Naive thymus-derived CD4-positive, alpha-beta T cell (primary cell): ENCODE measurements at regions of chr14 and their contacts with region 1.

Region 1: DNA sequence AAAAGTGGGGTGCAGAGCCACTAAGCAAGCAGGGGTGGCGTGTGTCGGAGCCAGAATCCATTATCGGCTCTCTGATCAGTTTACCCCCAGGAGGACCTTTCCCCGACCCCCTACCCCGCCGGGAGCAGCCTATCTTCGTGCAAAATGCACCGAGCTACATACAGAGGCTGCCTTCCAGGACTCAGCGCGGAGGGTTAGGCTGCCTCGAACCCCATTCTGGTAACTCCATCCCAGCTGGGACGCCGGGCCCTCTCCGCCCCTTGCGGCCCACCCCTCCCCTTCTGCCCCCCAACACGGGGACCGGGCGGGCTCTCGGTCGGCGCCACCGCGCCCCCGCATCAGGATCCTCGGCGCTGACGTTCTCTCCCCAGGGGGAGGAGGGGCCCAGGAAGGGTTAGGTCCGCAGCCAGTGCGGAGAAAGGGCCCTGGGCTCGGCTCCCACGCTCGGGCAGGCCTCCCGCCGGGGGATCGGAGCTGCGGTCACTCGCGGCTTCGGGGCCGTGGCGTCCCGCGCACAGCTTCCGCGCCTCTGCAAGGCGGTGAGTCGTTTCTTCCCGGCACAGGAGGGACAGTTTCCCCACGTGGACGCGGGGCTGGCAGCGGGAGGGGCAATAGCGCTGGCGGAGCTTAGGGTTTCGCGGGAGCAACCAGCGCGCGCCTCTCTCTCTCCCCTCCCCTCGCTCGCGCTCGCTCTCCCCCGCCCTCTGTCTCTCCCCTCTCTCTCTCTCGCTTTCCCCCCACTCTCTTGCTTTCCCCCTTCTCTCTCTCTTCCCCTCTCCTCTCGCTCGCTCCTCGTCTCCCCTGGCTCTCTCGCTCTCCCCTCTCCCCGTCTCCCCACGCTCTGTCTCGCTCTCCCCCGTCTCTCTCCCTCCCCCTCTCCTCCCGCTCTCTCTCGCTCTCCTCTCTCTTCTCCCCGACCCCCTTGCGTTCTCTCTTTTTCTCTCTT is 12.5 kb upstream of the MAP3K9 start:
- DNase-seq: peak in 7 of 9 donors; percentile 27 to 77 (median 38)
- ATAC-seq: peak; percentile 47
- H3K4me3 ChIP-seq: peak overlapping the region; percentile 64
- H3K4me3 Mint-ChIP-seq: peak overlapping the region; percentile 63 to 88 (median 86)
- H3K27ac ChIP-seq: peak overlapping the region; percentile 33
- H3K27ac Mint-ChIP-seq: peak overlapping the region in 3 of 9 donors; percentile 21 to 76 (median 46)
- H3K4me1 ChIP-seq: peaks cover 0 to 15% of the 10 kb centered on the region in 2 donors
- H3K4me1 Mint-ChIP-seq: peaks cover 6 to 36% (median 16%) of the 10 kb centered on the region in 7 donors
- H3K27me3 ChIP-seq: no peaks in the 10 kb centered on the region
- H3K27me3 Mint-ChIP-seq: peaks cover 6 to 34% (median 11%) of the 10 kb centered on the region in 5 donors

Region 2: GRCh38 chr14:70622111-70622712 is 199.6 kb before region 1 on chr14:
- CTCF ChIA-PET with region 1: interaction called, 8 read pairs
- POLR2A ChIA-PET with region 1: interaction called, 3 read pairs
- intact Hi-C with region 1: loop called (anchors 1 kb)
- DNase-seq: peak in 8 of 9 donors; percentile 42 to 66 (median 56)
- ATAC-seq: peak; percentile 85
- H3K4me3 ChIP-seq: no peak overlapping the region
- H3K4me3 Mint-ChIP-seq: peak overlapping the region in 1 of 10 donors; percentile 11
- H3K27ac ChIP-seq: no peak overlapping the region
- H3K27ac Mint-ChIP-seq: peak overlapping the region in 3 of 9 donors; percentile 2 to 29 (median 17)
- H3K4me1 ChIP-seq: no peaks in the 10 kb centered on the region
- H3K4me1 Mint-ChIP-seq: peaks cover 0 to 10% (median 6%) of the 10 kb centered on the region in 7 donors
- H3K27me3 ChIP-seq: no peaks in the 10 kb centered on the region
- H3K27me3 Mint-ChIP-seq: peaks cover 0 to 20% (median 0%) of the 10 kb centered on the region in 5 donors

Region 3: GRCh38 chr14:70770490-70770889 is 51.4 kb before region 1 on chr14:
- CTCF ChIA-PET with region 1: no interaction called
- POLR2A ChIA-PET with region 1: no interaction called
- intact Hi-C with region 1: no loop called
- DNase-seq: no peak
- ATAC-seq: no peak
- H3K4me3 ChIP-seq: no peak overlapping the region
- H3K4me3 Mint-ChIP-seq: no peak overlapping the region
- H3K27ac ChIP-seq: no peak overlapping the region
- H3K27ac Mint-ChIP-seq: no peak overlapping the region
- H3K4me1 ChIP-seq: no peaks in the 10 kb centered on the region
- H3K4me1 Mint-ChIP-seq: peaks cover 0 to 5% (median 0%) of the 10 kb centered on the region in 7 donors
- H3K27me3 ChIP-seq: no peaks in the 10 kb centered on the region
- H3K27me3 Mint-ChIP-seq: no peaks in the 10 kb centered on the region

Region 4: GRCh38 chr14:70809543-70810244 is 12.2 kb before region 1 on chr14:
- CTCF ChIA-PET with region 1: interaction called, 22 read pairs
- POLR2A ChIA-PET with region 1: interaction called, 4 read pairs
- intact Hi-C with region 1: loop called (anchors 1 kb)
- DNase-seq: peak; percentile 68 to 87 (median 78)
- ATAC-seq: peak; percentile 90
- H3K4me3 ChIP-seq: peak overlapping the region; percentile 73
- H3K4me3 Mint-ChIP-seq: peak overlapping the region in 1 of 10 donors; percentile 87
- H3K27ac ChIP-seq: peak overlapping the region; percentile 65
- H3K27ac Mint-ChIP-seq: peak overlapping the region in 6 of 9 donors; percentile 79 to 92 (median 88)
- H3K4me1 ChIP-seq: peaks cover 3 to 10% of the 10 kb centered on the region in 2 donors
- H3K4me1 Mint-ChIP-seq: peaks cover 9 to 17% (median 13%) of the 10 kb centered on the region in 7 donors
- H3K27me3 ChIP-seq: no peaks in the 10 kb centered on the region
- H3K27me3 Mint-ChIP-seq: peaks cover 0 to 9% (median 4%) of the 10 kb centered on the region in 5 donors

Region 5: DNA sequence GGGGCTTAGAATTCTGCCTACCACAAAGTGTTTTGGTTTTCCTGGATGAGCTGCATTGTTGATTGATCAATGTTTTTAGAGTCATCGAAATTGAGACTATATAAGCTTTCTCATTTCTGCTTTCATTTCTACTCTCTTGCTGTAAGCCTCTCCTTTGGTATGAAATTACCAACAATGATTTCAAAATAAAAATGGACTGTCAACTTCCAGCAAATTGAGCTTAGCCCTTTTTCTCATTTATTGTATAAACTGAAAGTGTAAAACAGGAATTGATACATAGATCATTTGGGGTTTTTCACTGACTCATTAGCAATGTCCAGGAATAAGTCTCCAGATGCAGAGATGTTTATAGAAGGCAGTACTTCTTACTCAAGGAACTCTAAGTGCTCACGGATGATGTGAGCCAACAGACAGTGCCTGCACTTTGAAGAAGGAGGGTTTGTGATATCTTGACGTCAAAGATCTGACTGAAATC is 65.4 kb after region 1 on chr14:
- CTCF ChIA-PET with region 1: interaction called, 6 read pairs
- POLR2A ChIA-PET with region 1: no interaction called
- intact Hi-C with region 1: loop called (anchors 5 kb)
- DNase-seq: peak in 1 of 9 donors; percentile 6
- ATAC-seq: peak; percentile 49
- H3K4me3 ChIP-seq: peak overlapping the region; percentile 34
- H3K4me3 Mint-ChIP-seq: peak overlapping the region; percentile 39 to 81 (median 70)
- H3K27ac ChIP-seq: peak overlapping the region; percentile 52
- H3K27ac Mint-ChIP-seq: peak overlapping the region; percentile 53 to 91 (median 87)
- H3K4me1 ChIP-seq: peaks cover 62 to 66% of the 10 kb centered on the region in 2 donors
- H3K4me1 Mint-ChIP-seq: peaks cover 60 to 97% (median 76%) of the 10 kb centered on the region in 7 donors
- H3K27me3 ChIP-seq: no peaks in the 10 kb centered on the region
- H3K27me3 Mint-ChIP-seq: no peaks in the 10 kb centered on the region

Region 6: GRCh38 chr14:70972107-70972976 is 150.5 kb after region 1 on chr14:
- CTCF ChIA-PET with region 1: interaction called, 14 read pairs
- POLR2A ChIA-PET with region 1: interaction called, 4 read pairs
- intact Hi-C with region 1: loop called (anchors 1 kb)
- DNase-seq: peak; percentile 64 to 80 (median 75)
- ATAC-seq: peak; percentile 91
- H3K4me3 ChIP-seq: no peak overlapping the region
- H3K4me3 Mint-ChIP-seq: peak overlapping the region in 2 of 10 donors; percentile 6 to 51
- H3K27ac ChIP-seq: peak overlapping the region; percentile 54
- H3K27ac Mint-ChIP-seq: peak overlapping the region in 8 of 9 donors; percentile 38 to 89 (median 77)
- H3K4me1 ChIP-seq: peaks cover 9 to 13% of the 10 kb centered on the region in 2 donors
- H3K4me1 Mint-ChIP-seq: peaks cover 13 to 70% (median 54%) of the 10 kb centered on the region in 7 donors
- H3K27me3 ChIP-seq: no peaks in the 10 kb centered on the region
- H3K27me3 Mint-ChIP-seq: no peaks in the 10 kb centered on the region